Activated CD4-positive, alpha-beta memory T cell treated with anti-CD3 and anti-CD28 coated beads for 36 hours (primary cell): ENCODE measurements at regions of chr5 and their contacts with region 1.

Region 1: DNA sequence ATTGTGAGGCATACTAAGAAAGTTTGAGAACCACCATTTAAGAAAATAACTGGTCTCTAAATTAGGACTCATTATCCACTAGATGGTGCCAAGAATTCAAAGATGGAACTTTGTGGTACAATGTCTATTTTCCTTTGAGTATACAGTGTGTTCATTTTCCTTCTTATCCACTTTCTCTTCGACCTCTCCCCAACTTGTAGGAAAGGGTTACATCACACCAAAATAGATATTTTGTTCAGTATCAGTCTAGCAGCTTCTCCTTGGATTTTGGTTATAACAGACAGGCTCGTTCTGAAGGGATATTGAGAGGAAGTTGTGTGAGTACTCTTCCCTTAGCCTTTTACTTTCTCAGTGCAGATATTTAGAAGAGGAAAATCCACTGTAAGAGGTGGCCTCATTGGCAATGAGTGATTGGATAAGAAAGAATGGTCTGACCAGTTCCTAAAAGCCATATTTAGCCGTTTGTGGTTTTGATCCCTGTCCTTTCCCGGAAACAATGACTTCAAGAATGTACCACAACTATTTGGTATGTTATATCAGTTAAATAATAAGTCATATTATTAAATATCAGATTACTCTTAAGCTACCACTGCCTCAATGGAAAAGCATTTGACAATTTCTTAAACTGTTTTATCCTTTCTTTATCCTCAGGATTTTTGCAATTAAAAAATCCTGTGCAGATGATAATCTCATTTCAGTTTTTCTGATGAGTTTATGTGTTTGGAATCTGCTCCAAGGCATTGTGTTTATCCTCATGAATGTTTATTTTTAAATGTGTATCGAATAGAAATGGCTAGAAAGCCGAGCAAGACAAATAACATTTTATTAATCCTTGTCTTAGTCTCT is 69.0 kb upstream of the GRAMD2B start:
- DNase-seq: no peak
- H3K4me3 Mint-ChIP-seq: no peak overlapping the region
- H3K27ac Mint-ChIP-seq: no peak overlapping the region
- H3K4me1 Mint-ChIP-seq: peaks cover 4% of the 10 kb centered on the region
- H3K27me3 Mint-ChIP-seq: peaks cover under 1% of the 10 kb centered on the region

Region 2: GRCh38 chr5:125778814-125779213 is 575.4 kb before region 1 on chr5:
- CTCF ChIA-PET with region 1: no interaction called
- POLR2A ChIA-PET with region 1: no interaction called
- intact Hi-C with region 1: no loop called
- DNase-seq: no peak
- H3K4me3 Mint-ChIP-seq: no peak overlapping the region
- H3K27ac Mint-ChIP-seq: no peak overlapping the region
- H3K4me1 Mint-ChIP-seq: no peaks in the 10 kb centered on the region
- H3K27me3 Mint-ChIP-seq: no peaks in the 10 kb centered on the region

Region 3: GRCh38 chr5:126339215-126339805 is 14.9 kb before region 1 on chr5:
- CTCF ChIA-PET with region 1: interaction called, 39 read pairs
- POLR2A ChIA-PET with region 1: no interaction called
- intact Hi-C with region 1: no loop called
- DNase-seq: peak; percentile 29
- H3K4me3 Mint-ChIP-seq: no peak overlapping the region
- H3K27ac Mint-ChIP-seq: no peak overlapping the region
- H3K4me1 Mint-ChIP-seq: no peaks in the 10 kb centered on the region
- H3K27me3 Mint-ChIP-seq: peaks cover 12% of the 10 kb centered on the region

Region 4: GRCh38 chr5:126490167-126490940 is 136.1 kb after region 1 on chr5:
- CTCF ChIA-PET with region 1: interaction called, 9 read pairs
- POLR2A ChIA-PET with region 1: no interaction called
- intact Hi-C with region 1: loop called (anchors 1 kb)
- DNase-seq: no peak
- H3K4me3 Mint-ChIP-seq: no peak overlapping the region
- H3K27ac Mint-ChIP-seq: no peak overlapping the region
- H3K4me1 Mint-ChIP-seq: no peaks in the 10 kb centered on the region
- H3K27me3 Mint-ChIP-seq: no peaks in the 10 kb centered on the region

Region 5: GRCh38 chr5:126544087-126544740 is 190.0 kb after region 1 on chr5:
- CTCF ChIA-PET with region 1: interaction called, 111 read pairs
- POLR2A ChIA-PET with region 1: no interaction called
- intact Hi-C with region 1: loop called (anchors 1 kb)
- DNase-seq: peak; percentile 56
- H3K4me3 Mint-ChIP-seq: no peak overlapping the region
- H3K27ac Mint-ChIP-seq: no peak overlapping the region
- H3K4me1 Mint-ChIP-seq: no peaks in the 10 kb centered on the region
- H3K27me3 Mint-ChIP-seq: no peaks in the 10 kb centered on the region

Region 6: DNA sequence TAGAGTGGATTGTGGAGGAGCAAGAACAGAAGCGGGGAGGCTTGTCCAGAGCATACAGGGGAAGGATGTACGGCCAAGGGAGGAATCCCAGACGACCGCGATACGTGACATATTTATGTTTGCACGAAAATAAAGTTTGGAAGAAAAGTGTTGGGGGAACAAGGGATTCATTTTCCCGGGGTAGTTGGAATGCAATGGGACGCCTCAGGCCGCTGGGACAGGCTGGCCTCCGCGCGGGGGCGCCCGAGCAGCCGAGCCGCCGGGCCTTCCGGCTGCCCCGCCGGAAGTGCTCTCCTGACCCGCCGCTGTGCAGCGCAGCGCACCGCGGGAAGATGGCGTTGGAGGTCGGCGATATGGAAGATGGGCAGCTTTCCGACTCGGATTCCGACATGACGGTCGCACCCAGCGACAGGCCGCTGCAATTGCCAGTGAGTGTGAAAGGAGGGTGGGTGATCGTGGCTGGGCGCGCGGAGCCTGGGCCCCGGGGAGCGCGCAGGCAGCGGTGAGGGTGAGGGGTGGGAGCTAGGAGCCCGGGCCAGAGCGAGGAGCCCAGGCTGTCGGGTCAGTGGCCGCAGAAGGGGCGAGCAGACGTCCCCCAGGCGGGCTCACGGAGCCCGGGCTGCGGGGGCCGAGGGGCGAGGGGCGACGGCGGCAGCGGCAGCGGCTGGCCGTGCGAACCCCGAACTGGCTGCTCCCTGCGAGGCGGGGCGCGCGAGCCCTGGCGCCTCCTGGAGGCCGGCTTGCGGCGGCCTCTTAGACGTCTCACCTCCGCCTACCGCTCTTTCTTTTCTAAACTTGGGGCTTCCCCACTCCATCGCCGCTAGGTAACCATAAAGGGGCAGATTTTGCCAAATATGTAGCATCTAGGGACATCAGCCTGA is 246.6 kb after region 1 on chr5 and contains the start of gene PHAX:
- CTCF ChIA-PET with region 1: interaction called, 4 read pairs
- POLR2A ChIA-PET with region 1: no interaction called
- intact Hi-C with region 1: loop called (anchors 5 kb)
- DNase-seq: peak; percentile 82
- H3K4me3 Mint-ChIP-seq: peak within 1 kb of the TSS; percentile 99
- H3K27ac Mint-ChIP-seq: peak within 1 kb of the TSS; percentile 97
- H3K4me1 Mint-ChIP-seq: peaks cover 35% of the 10 kb centered on the region
- H3K27me3 Mint-ChIP-seq: no peaks in the 10 kb centered on the region
- total RNA-seq, gene PHAX: 40.7 to 43.2 TPM